ENCODE measurements at regions of chr3 and their contacts with region 1.

Region 1: DNA sequence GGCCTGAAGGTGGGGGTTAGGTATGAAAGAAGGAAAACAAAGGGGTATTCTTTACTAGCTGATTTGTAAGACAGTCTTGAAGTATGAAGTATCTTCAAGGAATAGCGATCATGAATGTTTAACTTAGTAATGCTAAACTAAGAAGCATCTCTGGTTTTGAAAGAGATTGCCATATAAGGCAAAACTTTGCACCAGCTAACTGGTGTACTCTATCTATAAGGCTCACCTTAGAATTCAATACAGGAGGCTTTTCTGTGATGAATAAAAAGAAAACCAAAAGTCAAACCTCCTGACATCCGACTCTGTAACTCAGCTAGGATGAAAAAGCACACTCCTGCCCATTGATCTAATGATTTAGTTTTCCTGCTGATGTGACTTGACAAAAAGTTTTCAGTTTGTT is 54.7 kb downstream of the FOXP1 start:
- DNase-seq: no peak
- H3K4me3 ChIP-seq: no peak overlapping the region
- H3K27ac ChIP-seq: no peak overlapping the region
- H3K4me1 ChIP-seq: no peaks in the 10 kb centered on the region
- H3K27me3 ChIP-seq: no peaks in the 10 kb centered on the region
- CTCF ChIP-seq: no peak
- POLR2A ChIP-seq: no peak

Region 2: DNA sequence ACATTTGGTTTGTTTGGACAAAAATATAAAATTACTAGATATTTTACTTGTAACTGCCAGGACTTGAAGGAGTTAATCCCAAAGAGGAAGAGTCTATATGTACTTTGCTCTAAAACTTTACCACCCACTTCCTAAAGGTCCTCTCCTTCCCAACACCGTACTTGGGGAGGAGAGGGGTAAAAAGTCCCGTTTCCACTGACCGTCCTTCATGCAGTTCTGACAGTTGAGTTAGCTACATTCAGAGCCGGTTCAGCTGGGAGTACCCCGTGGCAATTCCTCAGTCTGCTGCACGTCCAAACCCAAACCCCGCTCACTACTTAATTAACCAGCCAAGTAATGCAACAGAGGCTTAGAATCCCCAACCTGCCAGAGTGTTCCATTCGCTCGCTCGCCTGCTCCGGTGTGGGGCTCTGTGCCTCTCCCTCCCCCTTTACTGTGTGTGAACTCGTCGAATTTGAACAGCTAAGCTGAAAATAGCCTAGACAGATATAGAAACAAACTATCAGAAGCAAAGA is 465.0 kb before region 1 on chr3:
- intact Hi-C with region 1: no loop called
- DNase-seq: no peak
- H3K4me3 ChIP-seq: peak overlapping the region; percentile 58 to 67
- H3K27ac ChIP-seq: peak overlapping the region; percentile 96 to 99
- H3K4me1 ChIP-seq: peaks cover 15% of the 10 kb centered on the region
- H3K27me3 ChIP-seq: no peaks in the 10 kb centered on the region
- CTCF ChIP-seq: no peak
- POLR2A ChIP-seq: no peak

Region 3: GRCh38 chr3:71515636-71516365 is 13.0 kb before region 1 on chr3:
- intact Hi-C with region 1: loop called (anchors 1 kb)
- DNase-seq: no peak
- H3K4me3 ChIP-seq: no peak overlapping the region
- H3K27ac ChIP-seq: no peak overlapping the region
- H3K4me1 ChIP-seq: no peaks in the 10 kb centered on the region
- H3K27me3 ChIP-seq: no peaks in the 10 kb centered on the region
- CTCF ChIP-seq: no peak
- POLR2A ChIP-seq: no peak

Region 4: DNA sequence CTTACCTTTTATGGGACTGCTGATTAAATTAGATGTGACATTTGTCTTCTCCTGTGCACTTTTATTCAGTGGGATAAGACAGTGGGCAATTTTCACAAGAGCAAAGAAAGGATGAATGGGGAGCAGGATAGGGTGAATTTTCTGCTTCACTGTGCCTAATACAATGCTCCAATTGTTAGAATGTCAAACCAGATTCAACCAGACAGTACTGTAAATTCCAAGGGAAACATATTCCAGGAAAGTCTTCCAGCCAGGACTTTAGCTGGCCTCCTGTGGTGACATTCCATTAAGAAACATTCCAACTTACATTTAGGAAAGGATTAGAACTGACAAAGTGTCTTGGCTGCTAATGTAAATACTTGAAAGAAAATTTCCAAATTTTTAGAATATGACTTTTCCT is 356.2 kb after region 1 on chr3:
- intact Hi-C with region 1: no loop called
- DNase-seq: no peak
- H3K4me3 ChIP-seq: no peak overlapping the region
- H3K27ac ChIP-seq: no peak overlapping the region
- H3K4me1 ChIP-seq: no peaks in the 10 kb centered on the region
- H3K27me3 ChIP-seq: no peaks in the 10 kb centered on the region
- CTCF ChIP-seq: no peak
- POLR2A ChIP-seq: no peak